ENCODE measurements at regions of chr9 and their contacts with region 1.

Region 1: DNA sequence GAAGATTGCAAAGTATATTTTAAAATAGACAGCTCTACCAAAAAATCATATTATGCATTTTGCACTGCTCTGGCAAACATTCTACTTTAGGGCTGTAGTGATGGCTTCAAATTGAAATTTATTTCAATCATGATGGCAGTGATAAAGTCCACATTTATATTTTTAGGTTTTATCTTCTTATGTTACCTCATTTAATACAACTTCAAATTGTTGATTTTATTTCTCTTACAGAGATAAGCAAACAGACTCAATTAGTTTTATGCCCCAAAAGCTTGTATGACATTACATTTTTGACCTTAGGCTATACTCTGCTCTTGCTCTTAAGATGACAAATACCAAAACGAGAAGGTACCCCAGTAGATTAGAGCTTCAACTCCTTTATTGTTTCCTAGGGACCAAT is 87.4 kb downstream of the CYLC2 start:
- DNase-seq: no peak
- ATAC-seq: no peak
- H3K4me3 ChIP-seq: no peak overlapping the region
- H3K27ac ChIP-seq: no peak overlapping the region
- H3K4me1 ChIP-seq: no peaks in the 10 kb centered on the region
- H3K27me3 ChIP-seq: no peaks in the 10 kb centered on the region
- CTCF ChIP-seq: no peak

Region 2: GRCh38 chr9:103139891-103140290 is 57.4 kb after region 1 on chr9:
- intact Hi-C with region 1: loop called in 1 of 2 experiments (anchors 10 kb)
- DNase-seq: no peak
- ATAC-seq: no peak
- H3K4me3 ChIP-seq: no peak overlapping the region
- H3K27ac ChIP-seq: no peak overlapping the region
- H3K4me1 ChIP-seq: no peaks in the 10 kb centered on the region
- H3K27me3 ChIP-seq: no peaks in the 10 kb centered on the region
- CTCF ChIP-seq: no peak

Region 3: DNA sequence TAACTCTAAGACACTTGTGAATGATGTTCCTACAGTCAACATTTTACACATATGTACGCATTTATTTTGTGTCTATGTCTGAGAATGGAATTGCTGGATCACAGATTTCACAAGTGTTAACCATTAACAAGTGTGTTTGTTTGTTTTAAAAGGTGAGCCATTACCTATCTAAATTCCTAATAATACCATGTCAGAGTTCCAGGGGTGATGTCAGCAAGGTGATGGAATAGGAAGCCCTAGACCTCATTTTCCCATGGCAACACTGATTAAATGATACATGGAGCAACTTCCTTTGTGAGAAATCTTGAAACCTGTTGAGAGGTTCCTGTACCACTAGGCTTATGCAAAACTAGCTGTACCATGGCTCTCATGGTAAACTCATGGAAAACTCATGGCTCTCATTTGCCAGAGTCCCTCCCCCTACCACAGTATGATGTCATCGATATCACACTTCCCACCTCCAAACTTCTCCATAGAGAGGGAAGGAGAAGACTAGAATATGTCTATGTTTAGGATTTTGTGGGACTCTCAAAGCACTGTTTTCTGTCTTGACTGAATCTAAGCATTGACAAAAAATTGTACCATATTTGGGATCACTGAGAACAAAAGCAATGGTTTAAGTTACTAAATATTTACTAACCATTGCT is 222.4 kb after region 1 on chr9:
- intact Hi-C with region 1: no loop called
- DNase-seq: no peak
- ATAC-seq: no peak
- H3K4me3 ChIP-seq: no peak overlapping the region
- H3K27ac ChIP-seq: no peak overlapping the region
- H3K4me1 ChIP-seq: no peaks in the 10 kb centered on the region
- H3K27me3 ChIP-seq: no peaks in the 10 kb centered on the region
- CTCF ChIP-seq: no peak